Panc1 (cell line): ENCODE measurements at regions of chr9 and their contacts with region 1.

Region 1: DNA sequence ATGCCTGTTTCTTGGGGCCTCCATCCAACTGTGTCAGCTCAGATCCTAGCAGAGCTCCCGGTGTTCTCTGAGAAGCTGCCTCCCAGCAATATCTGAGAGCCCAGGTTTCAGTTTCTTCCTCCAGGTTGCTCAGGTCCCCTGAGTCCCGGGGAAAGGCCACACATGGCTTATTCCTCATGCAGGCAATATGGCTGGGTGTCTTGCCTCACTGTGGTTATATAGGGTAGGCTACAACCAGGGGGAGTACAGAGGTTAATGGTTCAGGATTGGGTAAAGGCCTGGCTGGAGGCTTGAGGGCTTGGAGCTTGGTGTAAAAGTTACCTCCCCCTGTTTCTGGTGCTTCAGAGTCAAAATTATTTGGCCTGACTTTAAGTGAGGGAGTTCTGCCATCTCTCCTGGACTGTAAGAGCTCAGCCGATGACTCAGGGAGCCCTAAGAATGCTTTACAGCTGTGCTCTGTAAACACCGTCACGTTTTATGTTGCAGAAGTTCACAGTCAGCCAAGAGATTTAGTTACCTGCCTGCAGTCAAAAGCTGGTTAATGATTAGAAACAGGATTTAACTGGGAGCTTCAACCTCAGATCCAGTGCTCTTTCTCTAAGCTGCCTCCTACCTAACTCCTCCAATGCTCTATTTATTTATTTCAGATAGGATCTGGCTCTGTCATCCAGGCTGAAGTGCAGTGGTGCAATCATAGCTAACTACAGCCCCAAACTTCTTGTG is 24.3 kb upstream of the UBAP2 start:
- DNase-seq: no peak
- ATAC-seq: no peak
- H3K4me3 ChIP-seq: no peak overlapping the region
- H3K27ac ChIP-seq: peak overlapping the region; percentile 27
- H3K4me1 ChIP-seq: 0 out of 2 replicates have a peak, but pooled peaks cover 6% of the 10 kb centered on the region
- H3K27me3 ChIP-seq: no peaks in the 10 kb centered on the region
- CTCF ChIP-seq: no peak

Region 2: DNA sequence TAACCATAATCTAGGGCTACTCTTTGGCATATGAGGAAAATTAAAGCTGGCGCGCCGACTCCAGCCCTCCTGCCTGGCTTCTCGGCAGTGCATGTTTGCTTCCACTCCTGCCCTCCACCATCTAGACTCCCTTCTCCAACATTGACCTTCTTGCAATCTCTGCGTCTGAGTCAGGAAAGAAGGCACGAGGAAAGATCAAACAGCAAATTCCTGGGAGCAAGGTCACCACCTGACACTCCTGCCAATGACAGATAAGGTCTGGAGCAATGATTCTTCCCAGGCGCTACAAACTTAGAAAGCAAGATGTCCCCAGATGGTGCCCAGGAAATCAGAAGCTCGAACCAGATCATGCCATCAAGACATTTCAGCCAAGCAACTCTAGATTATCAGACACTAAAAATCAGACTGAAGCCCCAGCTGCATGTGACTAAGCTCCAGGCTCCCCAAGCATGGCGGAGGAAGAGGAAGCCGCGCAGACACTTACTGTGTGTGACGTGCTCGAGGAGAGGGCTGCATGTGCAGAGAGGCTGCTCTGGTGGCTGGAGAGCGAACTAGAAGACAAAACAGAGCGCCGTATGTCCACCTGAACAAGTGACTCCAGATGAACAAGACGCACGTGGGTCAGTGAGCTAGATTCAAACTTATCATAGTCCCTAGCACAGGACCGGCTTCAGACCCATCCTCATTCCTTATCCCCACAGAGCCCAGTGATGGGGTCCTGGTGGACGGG is 140.8 kb before region 1 on chr9:
- CTCF ChIA-PET with region 1: no interaction called
- POLR2A ChIA-PET with region 1: no interaction called
- in situ Hi-C with region 1: no loop called
- intact Hi-C with region 1: loop called (anchors 5 kb)
- DNase-seq: no peak
- ATAC-seq: no peak
- H3K4me3 ChIP-seq: no peak overlapping the region
- H3K27ac ChIP-seq: no peak overlapping the region
- H3K4me1 ChIP-seq: no peaks in the 10 kb centered on the region
- H3K27me3 ChIP-seq: no peaks in the 10 kb centered on the region
- CTCF ChIP-seq: no peak

Region 3: DNA sequence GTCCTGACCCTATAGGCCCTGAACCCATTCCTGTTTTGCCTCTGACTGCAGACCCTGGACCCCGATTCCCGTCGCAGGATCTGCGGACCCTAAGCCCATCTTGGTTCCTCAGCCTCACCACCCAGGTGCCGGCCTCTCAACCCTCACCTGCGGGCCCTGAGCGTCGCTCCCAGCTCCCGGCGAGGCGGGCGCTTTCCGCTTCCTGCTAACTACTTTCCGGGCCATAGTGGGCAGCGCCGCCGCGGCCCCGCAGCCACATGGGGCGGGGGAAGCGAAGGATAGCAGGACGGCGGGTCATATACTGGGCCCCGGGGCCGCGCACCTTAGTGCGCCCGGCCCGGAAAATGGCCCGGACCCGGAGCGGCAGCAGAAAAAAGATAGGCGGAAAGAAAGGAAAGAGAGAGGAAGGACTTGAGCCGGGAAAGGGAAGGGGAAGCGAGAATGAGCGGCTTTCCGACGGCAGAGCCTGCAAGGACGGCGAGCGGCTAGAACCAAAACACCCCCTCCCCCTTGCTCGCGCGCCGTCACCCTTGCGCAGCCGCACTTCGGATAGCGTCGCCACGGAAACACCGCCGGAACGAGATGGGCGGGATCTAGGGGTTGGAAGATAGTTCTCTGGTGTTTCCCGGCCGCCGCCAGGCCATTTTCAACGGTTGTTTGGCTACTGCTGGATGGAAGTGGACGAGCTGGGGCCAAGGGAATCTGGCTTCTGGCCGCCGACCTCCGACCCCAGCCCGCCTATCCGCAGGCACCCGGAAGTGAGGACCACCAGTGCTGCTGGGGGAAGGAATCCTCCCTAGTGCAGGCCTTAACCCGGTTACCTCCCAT is 53.4 kb after region 1 on chr9 and contains the start of gene DCAF12:
- CTCF ChIA-PET with region 1: no interaction called
- POLR2A ChIA-PET with region 1: interaction called, 10 read pairs
- in situ Hi-C with region 1: no loop called
- intact Hi-C with region 1: loop called (anchors 5 kb)
- DNase-seq: peak; percentile 50
- ATAC-seq: peak; percentile 96
- H3K4me3 ChIP-seq: peak within 1 kb of the TSS; percentile 86 to 90
- H3K27ac ChIP-seq: peak within 1 kb of the TSS; percentile 92
- H3K4me1 ChIP-seq: peaks cover 17% of the 10 kb centered on the region
- H3K27me3 ChIP-seq: no peaks in the 10 kb centered on the region
- CTCF ChIP-seq: no peak
- total RNA-seq, gene DCAF12: 38.3 TPM

Region 4: DNA sequence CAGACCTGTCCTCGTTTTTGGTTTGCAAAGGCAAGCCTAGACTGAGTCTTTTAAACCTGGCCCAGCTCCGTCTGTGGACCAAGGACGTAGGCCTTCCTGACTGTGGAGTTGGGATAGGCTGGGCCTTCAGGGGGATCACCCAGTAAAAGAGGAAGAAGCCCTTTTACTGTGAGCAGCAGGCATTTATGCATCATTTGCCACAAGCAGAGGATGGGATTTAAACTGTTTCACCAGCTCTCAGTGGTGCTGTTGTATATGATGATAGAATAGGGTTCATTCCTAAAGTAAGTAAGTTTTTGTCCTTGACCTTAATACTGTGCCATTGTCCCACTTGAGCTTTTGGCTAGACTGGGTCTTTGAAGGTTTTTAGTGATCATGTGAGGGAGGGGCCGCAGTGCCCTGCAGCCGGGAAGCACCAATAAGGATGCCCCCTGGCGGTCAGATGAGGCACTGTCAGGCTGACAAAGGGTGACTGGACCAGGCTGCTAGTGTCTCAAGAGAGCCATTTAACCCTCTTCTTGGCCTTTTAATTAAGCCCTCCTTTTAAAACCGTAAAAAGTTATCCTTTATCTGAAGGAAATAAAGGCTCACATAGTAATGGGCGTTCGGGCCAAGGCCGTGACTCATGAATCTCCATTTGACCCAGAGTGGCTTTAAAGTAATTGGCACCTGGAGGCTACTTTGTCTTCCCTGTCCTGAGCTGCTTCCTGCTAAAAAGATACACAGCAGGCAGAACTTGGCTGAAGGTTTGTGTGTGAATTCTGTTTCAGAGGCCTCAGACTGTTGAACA is 179.8 kb after region 1 on chr9:
- CTCF ChIA-PET with region 1: interaction called, 7 read pairs
- POLR2A ChIA-PET with region 1: no interaction called
- in situ Hi-C with region 1: no loop called
- intact Hi-C with region 1: loop called (anchors 2 kb)
- DNase-seq: peak; percentile 46
- ATAC-seq: peak; percentile 73
- H3K4me3 ChIP-seq: no peak overlapping the region
- H3K27ac ChIP-seq: no peak overlapping the region
- H3K4me1 ChIP-seq: peaks cover 21% of the 10 kb centered on the region
- H3K27me3 ChIP-seq: no peaks in the 10 kb centered on the region
- CTCF ChIP-seq: no peak